GM10248 (cell line): ENCODE measurements at regions of chr4 and their contacts with region 1.

Region 1: DNA sequence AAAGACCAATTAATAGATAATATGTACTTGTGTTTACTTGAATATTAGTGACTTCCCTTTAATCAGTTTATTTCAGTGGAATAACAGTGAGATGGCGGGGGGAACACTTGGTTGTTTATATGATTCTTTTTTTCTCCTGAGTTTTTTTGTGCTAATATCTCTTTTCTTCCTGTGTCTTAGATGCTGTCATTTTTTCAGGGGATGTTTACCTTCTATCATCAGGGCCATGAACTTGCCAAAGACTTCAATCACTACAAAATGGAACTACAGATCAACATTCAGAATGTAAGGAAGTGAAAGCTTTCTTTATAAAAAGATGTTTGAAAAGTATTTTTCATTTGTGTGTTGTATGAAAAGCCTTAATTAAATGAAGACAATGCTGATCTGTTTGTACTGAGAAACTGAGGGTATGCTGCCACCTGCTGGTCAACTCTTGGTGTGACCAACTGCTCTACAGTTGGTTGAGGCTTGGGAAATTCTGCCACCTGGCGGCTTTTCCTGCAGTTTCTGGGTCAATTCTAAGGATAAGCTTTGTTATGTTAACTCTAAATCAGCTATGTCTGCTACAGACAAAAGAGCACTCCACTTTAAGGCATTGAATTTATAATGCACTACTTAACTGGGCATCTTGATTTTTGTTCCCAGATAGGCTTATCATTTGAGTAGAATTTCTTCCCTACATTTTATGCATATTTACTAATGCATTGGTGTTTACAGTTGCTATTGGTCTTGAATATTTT is 134.8 kb downstream of the ARHGAP10 start:
- DNase-seq: peak; percentile 80
- CTCF ChIP-seq: peak; percentile 97

Region 2: GRCh38 chr4:147596981-147597380 is 269.7 kb before region 1 on chr4:
- CTCF ChIA-PET with region 1: interaction called, 124 read pairs
- POLR2A ChIA-PET with region 1: no interaction called
- DNase-seq: no peak
- CTCF ChIP-seq: no peak

Region 3: GRCh38 chr4:147683717-147684700 is 182.7 kb before region 1 on chr4 and contains the start of gene PRMT9:
- CTCF ChIA-PET with region 1: interaction called, 66 read pairs
- POLR2A ChIA-PET with region 1: no interaction called
- DNase-seq: peak; percentile 97
- CTCF ChIP-seq: no peak

Region 4: DNA sequence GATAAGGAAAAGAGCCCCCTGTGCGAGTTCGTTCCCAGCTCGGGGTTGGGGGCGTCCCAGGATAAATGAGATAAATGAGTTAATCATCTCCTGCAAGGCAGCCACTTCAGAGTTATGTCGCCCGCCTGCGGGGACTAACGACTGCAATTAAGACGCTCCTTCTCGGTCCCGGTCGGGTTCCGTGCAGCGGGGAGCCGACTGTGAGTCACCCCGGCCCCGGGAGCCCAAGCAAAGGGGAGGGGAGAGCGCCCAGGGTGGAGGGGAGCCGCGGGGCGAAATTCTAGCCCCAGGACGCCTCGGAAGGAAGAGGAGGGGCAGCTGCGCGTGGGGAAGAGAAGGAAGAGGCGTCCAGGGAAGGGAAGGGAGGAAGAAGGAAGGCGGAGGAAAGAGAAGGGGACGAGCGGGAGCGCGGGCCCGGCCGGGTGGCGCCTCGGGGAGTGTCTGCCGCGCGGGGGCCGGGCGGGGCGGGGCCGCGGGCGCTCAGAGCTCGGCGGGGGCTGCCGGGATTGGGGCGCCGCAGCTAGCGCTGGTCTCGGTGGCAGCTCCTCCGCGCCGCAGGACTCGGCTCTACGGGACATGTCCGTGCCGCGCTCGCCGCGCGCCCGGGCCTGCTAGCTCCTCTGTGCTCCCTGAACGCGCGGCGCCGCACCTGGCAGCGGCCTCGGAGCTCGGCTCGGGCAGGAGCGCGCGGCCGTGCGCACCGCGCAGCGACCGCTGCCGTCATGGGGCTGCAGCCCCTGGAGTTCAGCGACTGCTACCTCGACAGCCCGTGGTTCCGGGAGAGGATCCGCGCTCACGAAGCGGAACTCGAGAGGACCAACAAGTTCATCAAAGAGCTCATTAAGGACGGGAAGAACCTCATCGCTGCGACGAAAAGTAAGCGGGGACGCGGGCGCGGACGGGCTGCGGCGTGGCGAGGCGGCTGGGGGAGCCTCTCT is 134.9 kb before region 1 on chr4 and contains the start of gene ARHGAP10:
- CTCF ChIA-PET with region 1: interaction called, 59 read pairs
- POLR2A ChIA-PET with region 1: no interaction called
- DNase-seq: peak; percentile 79
- CTCF ChIP-seq: no peak

Region 5: GRCh38 chr4:147793569-147794313 is 73.0 kb before region 1 on chr4:
- CTCF ChIA-PET with region 1: interaction called, 43 read pairs
- POLR2A ChIA-PET with region 1: no interaction called
- DNase-seq: peak; percentile 34
- CTCF ChIP-seq: no peak

Region 6: GRCh38 chr4:147843162-147843561 is 23.5 kb before region 1 on chr4:
- CTCF ChIA-PET with region 1: interaction called, 210 read pairs
- POLR2A ChIA-PET with region 1: no interaction called
- DNase-seq: peak; percentile 37
- CTCF ChIP-seq: peak; percentile 4

Region 7: GRCh38 chr4:148243837-148244236 is 377.1 kb after region 1 on chr4:
- CTCF ChIA-PET with region 1: no interaction called
- POLR2A ChIA-PET with region 1: no interaction called
- DNase-seq: no peak
- CTCF ChIP-seq: no peak